ENCODE measurements at regions of chr1 and their contacts with region 1.

Region 1: GRCh38 chr1:12019858-12020509 is 686 bp downstream of the MIIP start:
- DNase-seq: no peak
- ATAC-seq: no peak
- H3K4me3 Mint-ChIP-seq: peak overlapping the region; percentile 88
- H3K27ac Mint-ChIP-seq: peak overlapping the region; percentile 37
- H3K4me1 Mint-ChIP-seq: peaks cover 14% of the 10 kb centered on the region
- H3K27me3 Mint-ChIP-seq: no peaks in the 10 kb centered on the region
- CTCF ChIP-seq: no peak

Region 2: GRCh38 chr1:11934302-11935056 is 85.5 kb before region 1 on chr1 and contains the start of gene PLOD1:
- CTCF ChIA-PET with region 1: no interaction called
- POLR2A ChIA-PET with region 1: interaction called, 10 read pairs
- intact Hi-C with region 1: no loop called
- DNase-seq: peak; percentile 76
- ATAC-seq: peak; percentile 99
- H3K4me3 Mint-ChIP-seq: peak within 1 kb of the TSS; percentile 86
- H3K27ac Mint-ChIP-seq: peak within 1 kb of the TSS; percentile 59
- H3K4me1 Mint-ChIP-seq: peaks cover 7% of the 10 kb centered on the region
- H3K27me3 Mint-ChIP-seq: no peaks in the 10 kb centered on the region
- CTCF ChIP-seq: no peak
- total RNA-seq, gene PLOD1: 15.7 and 18.6 TPM in 2 replicates

Region 3: DNA sequence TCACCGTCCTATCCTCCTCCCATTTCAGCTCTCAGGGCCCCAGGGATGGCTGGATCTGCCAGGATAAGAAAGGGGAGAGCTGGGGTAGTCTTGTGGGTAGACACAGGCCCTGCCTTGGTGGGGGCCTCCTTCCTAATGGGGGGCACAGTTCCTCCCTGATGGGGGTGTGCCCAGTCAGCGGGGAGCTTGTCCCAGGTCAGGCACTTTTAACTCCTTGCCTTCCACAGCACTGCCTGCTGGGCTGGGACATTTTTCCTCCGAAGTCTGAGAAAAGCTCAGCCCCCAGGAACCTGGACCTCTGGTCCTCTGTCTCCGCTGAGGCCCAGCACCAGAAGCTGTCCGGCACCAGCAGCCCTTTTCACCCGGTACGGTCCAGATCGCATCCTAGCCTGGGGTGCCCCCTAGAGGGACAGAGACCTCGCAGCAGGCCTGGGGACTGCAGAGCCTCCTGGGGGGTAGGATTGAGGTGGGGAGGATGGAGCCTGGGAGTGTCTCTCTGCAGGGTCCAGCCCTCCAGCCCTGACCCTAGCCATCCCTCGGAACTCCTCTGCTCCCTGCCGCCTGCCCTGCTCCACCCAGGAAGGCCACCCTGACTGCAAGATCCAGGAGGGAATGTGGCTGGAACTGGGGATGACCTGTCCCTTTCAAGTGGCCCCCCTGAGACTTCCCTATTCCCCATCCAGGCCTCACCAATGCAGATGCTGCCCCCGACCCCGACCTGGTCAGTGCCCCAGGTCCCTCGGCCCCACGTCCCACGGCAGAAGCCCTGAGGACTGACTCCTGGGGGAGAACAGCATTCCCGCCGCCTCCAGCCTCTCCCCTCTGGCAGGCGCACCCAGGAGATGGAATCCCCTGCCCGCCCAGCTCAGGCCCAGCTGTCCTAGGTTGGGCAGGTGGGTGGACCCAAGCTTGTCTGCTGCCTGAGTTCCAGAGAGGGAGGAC is 11.3 kb after region 1 on chr1:
- CTCF ChIA-PET with region 1: interaction called, 3 read pairs
- POLR2A ChIA-PET with region 1: interaction called, 21 read pairs
- intact Hi-C with region 1: no loop called
- DNase-seq: no peak
- ATAC-seq: peak; percentile 73
- H3K4me3 Mint-ChIP-seq: no peak overlapping the region
- H3K27ac Mint-ChIP-seq: no peak overlapping the region
- H3K4me1 Mint-ChIP-seq: peaks cover 15% of the 10 kb centered on the region
- H3K27me3 Mint-ChIP-seq: no peaks in the 10 kb centered on the region
- CTCF ChIP-seq: no peak

Region 4: GRCh38 chr1:12052008-12052573 is 32.1 kb after region 1 on chr1:
- CTCF ChIA-PET with region 1: interaction called, 3 read pairs
- POLR2A ChIA-PET with region 1: interaction called, 25 read pairs
- intact Hi-C with region 1: loop called (anchors 1 kb)
- DNase-seq: peak; percentile 45
- ATAC-seq: peak; percentile 84
- H3K4me3 Mint-ChIP-seq: peak overlapping the region; percentile 57
- H3K27ac Mint-ChIP-seq: peak overlapping the region; percentile 77
- H3K4me1 Mint-ChIP-seq: peaks cover 26% of the 10 kb centered on the region
- H3K27me3 Mint-ChIP-seq: no peaks in the 10 kb centered on the region
- CTCF ChIP-seq: no peak

Region 5: GRCh38 chr1:12087797-12088314 is 67.9 kb after region 1 on chr1:
- CTCF ChIA-PET with region 1: no interaction called
- POLR2A ChIA-PET with region 1: interaction called, 15 read pairs
- intact Hi-C with region 1: no loop called
- DNase-seq: peak; percentile 45
- ATAC-seq: peak; percentile 88
- H3K4me3 Mint-ChIP-seq: peak overlapping the region; percentile 53
- H3K27ac Mint-ChIP-seq: peak overlapping the region; percentile 95
- H3K4me1 Mint-ChIP-seq: peaks cover 45% of the 10 kb centered on the region
- H3K27me3 Mint-ChIP-seq: no peaks in the 10 kb centered on the region
- CTCF ChIP-seq: no peak

Measured in activated B cell treated with CpG ODN at 0.5 μM for 24 hours (primary cell).